ENCODE measurements at regions of chr15 and their contacts with region 1.

Region 1: GRCh38 chr15:77138167-77138522 is 67.2 kb upstream of the TSPAN3 start:
- DNase-seq: no peak
- H3K4me3 ChIP-seq: no peak overlapping the region
- H3K27ac ChIP-seq: no peak overlapping the region
- H3K4me1 ChIP-seq: no peaks in the 10 kb centered on the region
- H3K27me3 ChIP-seq: no peaks in the 10 kb centered on the region
- CTCF ChIP-seq: no peak

Region 2: GRCh38 chr15:77053709-77054108 is 84.4 kb before region 1 on chr15:
- CTCF ChIA-PET with region 1: no interaction called
- POLR2A ChIA-PET with region 1: no interaction called
- intact Hi-C with region 1: no loop called
- DNase-seq: no peak
- H3K4me3 ChIP-seq: no peak overlapping the region
- H3K27ac ChIP-seq: no peak overlapping the region
- H3K4me1 ChIP-seq: peaks cover 13% of the 10 kb centered on the region
- H3K27me3 ChIP-seq: no peaks in the 10 kb centered on the region
- CTCF ChIP-seq: no peak

Region 3: GRCh38 chr15:77168616-77169015 is 30.5 kb after region 1 on chr15:
- CTCF ChIA-PET with region 1: no interaction called
- POLR2A ChIA-PET with region 1: no interaction called
- intact Hi-C with region 1: no loop called
- DNase-seq: no peak
- H3K4me3 ChIP-seq: no peak overlapping the region
- H3K27ac ChIP-seq: no peak overlapping the region
- H3K4me1 ChIP-seq: no peaks in the 10 kb centered on the region
- H3K27me3 ChIP-seq: no peaks in the 10 kb centered on the region
- CTCF ChIP-seq: no peak

Region 4: DNA sequence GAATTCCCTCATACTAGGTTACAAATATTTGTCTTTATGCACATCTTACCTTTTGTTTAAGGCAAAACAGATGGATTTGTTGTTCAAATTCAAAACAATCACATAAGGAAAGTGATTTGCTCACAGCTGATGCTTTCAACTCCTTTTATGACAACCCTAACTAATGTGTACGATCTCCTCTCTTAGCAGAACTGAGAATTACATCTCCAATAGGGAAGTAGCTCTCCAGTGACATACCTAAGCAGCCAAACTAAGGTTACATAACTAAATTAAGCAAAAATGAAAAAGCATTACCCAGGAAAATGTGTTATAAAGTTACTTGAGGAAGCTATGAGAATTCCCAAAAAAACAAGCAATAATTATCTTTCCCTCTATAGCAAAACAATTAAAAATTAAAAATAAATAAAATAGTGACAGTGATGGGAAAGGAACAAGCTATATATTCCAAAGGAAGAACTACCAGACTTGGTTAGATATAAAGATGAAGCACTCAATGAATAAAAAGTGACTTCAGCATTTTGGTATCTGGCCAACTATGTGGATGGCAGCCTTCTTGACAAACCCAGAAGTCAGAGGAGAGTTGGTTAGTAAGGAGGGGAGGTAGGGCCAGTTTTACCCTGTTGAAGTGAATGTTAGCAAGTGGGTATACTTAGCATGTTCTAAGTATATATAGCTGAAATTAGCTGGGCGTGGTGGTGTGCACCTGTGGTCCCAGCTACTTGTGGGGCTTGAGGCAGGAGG is 249.4 kb after region 1 on chr15:
- CTCF ChIA-PET with region 1: no interaction called
- POLR2A ChIA-PET with region 1: no interaction called
- intact Hi-C with region 1: no loop called
- DNase-seq: peak; percentile 27
- H3K4me3 ChIP-seq: no peak overlapping the region
- H3K27ac ChIP-seq: no peak overlapping the region
- H3K4me1 ChIP-seq: peaks cover 20% of the 10 kb centered on the region
- H3K27me3 ChIP-seq: no peaks in the 10 kb centered on the region
- CTCF ChIP-seq: no peak

Region 5: GRCh38 chr15:77607111-77607893 is 469.2 kb after region 1 on chr15:
- CTCF ChIA-PET with region 1: no interaction called
- POLR2A ChIA-PET with region 1: no interaction called
- intact Hi-C with region 1: no loop called
- DNase-seq: peak; percentile 94
- H3K4me3 ChIP-seq: no peak overlapping the region
- H3K27ac ChIP-seq: peak overlapping the region; percentile 76
- H3K4me1 ChIP-seq: peaks cover 60% of the 10 kb centered on the region
- H3K27me3 ChIP-seq: no peaks in the 10 kb centered on the region
- CTCF ChIP-seq: no peak

Region 6: DNA sequence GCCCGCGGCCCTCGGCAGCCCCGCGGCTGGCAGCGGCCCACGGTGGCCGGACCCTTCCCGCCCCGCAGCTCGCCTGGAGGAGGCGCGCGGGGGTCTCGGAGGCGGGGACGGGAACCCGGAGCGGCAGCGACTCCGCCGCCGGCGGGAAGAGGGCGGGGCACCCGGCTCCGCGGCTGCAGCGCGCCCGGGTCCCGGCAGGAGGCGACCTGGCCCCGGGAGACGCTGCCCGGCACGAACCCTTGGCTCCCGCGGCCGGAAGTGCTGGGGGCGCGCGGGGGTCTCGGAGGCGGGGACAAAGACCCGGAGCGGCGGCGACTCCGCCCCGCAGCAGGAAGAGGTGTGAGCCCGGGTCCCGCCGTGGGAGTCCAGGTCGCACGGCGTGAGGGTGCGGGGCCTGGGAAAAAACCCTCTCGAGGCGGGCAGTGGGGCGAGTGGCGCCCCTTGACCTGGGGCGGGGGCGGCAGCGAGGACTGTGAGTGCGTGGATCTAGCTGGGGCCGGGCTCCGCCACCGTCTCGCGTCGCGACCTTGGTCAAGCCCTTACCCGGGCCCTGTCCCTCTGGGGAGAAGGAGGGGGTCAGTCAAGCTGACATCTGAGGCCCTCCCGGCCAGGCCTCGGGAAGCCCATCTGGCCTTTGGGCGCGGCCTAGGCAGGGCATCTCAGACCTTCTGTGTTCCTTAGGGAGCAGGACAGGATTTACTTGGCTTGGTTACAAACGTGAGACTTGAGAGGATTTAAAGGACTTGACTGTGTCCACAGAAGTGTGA is 993.3 kb after region 1 on chr15 and contains the start of gene CIB2:
- CTCF ChIA-PET with region 1: interaction called, 10 read pairs
- POLR2A ChIA-PET with region 1: no interaction called
- intact Hi-C with region 1: no loop called
- DNase-seq: peak; percentile 76
- H3K4me3 ChIP-seq: peak within 1 kb of the TSS; percentile 65
- H3K27ac ChIP-seq: peak within 1 kb of the TSS; percentile 60
- H3K4me1 ChIP-seq: peaks cover 8% of the 10 kb centered on the region
- H3K27me3 ChIP-seq: no peaks in the 10 kb centered on the region
- CTCF ChIP-seq: peak; percentile 47; the same call in 1 of the 2 replicates
- total RNA-seq, gene CIB2: 1.7 and 2.1 TPM in 2 replicates

Measured in A673 (cell line).